AG04449 (cell line): ENCODE measurements at regions of chr3 and their contacts with region 1.

Region 1: GRCh38 chr3:149566292-149566975 is 91.4 kb downstream of the WWTR1 start:
- DNase-seq: no peak
- H3K4me3 ChIP-seq: no peak overlapping the region
- CTCF ChIP-seq: no peak

Region 2: GRCh38 chr3:149553781-149554451 is 12.5 kb before region 1 on chr3:
- CTCF ChIA-PET with region 1: interaction called, 34 read pairs
- POLR2A ChIA-PET with region 1: interaction called, 3 read pairs
- DNase-seq: no peak
- H3K4me3 ChIP-seq: no peak overlapping the region
- CTCF ChIP-seq: no peak